Head of caudate nucleus (tissue), 42 donors: ENCODE measurements at regions of chr9 and their contacts with region 1.

Region 1: GRCh38 chr9:124415102-124415851 is at the start of gene PSMB7:
- DNase-seq: peak; percentile 91 to 99 (median 96)

Region 2: GRCh38 chr9:124493794-124494479 is 78.7 kb after region 1 on chr9:
- intact Hi-C with region 1: no loop called
- DNase-seq: no peak

Region 3: DNA sequence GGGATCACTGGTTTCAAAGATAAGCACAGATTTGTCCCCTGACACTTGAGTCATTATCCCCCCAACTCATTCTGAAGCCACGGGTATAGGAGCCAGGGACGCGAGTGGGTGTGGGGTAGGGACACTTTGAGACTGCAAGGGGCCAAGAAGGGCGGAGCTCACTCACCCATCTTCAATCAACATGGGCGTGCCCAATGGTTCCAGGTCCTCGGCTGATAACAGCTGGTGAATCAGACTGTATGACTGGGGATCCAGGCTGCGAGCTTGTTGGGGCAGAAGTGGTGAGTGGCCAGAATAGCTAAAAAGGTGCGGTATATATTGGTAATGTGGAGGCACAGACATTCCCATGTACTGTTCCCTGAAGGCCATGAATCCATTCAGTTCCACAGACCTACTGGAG is 122.6 kb after region 1 on chr9:
- intact Hi-C with region 1: loop called (anchors 5 kb)
- DNase-seq: no peak